Right ventricle myocardium inferior (tissue), 1 donor: ENCODE measurements at regions of chr12 and their contacts with region 1.

Region 1: DNA sequence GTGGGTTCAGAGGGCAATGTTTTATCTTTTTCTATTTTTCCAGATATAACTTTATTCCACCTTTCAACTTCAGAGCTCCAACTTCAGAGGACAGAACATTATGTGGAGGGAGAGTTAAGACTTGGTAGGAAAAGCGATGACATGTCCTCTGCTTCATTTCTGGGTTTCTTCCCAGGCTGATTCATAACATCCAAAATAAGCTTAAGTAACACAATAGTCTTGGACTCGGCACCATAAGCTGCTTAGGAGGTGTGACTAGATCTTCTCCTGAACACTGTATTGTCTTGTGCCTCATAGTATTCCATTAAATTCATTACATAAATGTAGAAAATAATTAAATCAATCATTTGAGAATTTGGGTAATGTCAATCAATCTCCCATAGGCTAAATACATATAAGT is 95.5 kb upstream of the PDE3A start:
- DNase-seq: no peak
- ATAC-seq: peak; percentile 74

Region 2: GRCh38 chr12:19757317-19757877 is 515.4 kb before region 1 on chr12:
- intact Hi-C with region 1: loop called (anchors 10 kb)
- DNase-seq: no peak
- ATAC-seq: peak; percentile 42

Region 3: DNA sequence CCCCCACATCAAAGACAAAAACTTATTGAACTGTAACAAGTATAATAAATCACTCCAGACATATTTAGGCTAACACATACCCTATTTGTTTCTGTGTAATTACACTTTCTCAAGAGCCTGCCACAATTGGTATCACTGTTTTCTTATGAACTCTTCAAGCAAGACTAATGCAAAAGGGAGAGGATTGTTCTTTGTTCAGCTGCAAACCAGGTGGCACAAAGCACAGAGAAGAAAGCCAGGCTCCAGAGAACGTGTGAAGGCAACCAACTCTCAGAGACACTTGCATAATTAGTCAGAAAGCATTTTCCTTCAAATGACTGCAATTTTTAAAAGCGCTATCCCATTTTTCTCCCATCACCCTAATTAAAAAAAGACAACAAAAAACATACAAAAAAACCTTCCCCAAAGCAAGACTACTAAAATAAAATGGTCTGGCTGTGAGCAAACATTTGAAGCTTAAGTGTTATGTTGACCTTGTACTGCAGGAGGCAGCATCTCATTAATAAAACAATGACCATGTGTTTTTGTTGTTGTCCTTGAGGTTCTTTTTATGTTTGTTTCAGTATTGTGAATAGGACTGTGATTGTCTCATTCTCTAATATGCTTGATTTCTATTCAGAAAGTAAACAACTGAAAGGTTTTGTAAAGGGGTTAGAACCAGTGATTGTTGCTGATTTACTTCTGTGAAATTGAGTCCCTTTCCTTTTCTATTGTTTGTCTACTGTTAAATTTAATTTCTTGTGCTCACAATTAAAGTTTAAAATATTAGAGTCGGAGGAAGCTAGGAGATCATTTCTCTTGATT is 357.2 kb before region 1 on chr12:
- intact Hi-C with region 1: loop called (anchors 2 kb)
- DNase-seq: no peak
- ATAC-seq: peak; percentile 70

Region 4: GRCh38 chr12:19994970-19995369 is 277.8 kb before region 1 on chr12:
- intact Hi-C with region 1: loop called (anchors 5 kb)
- DNase-seq: no peak
- ATAC-seq: no peak

Region 5: DNA sequence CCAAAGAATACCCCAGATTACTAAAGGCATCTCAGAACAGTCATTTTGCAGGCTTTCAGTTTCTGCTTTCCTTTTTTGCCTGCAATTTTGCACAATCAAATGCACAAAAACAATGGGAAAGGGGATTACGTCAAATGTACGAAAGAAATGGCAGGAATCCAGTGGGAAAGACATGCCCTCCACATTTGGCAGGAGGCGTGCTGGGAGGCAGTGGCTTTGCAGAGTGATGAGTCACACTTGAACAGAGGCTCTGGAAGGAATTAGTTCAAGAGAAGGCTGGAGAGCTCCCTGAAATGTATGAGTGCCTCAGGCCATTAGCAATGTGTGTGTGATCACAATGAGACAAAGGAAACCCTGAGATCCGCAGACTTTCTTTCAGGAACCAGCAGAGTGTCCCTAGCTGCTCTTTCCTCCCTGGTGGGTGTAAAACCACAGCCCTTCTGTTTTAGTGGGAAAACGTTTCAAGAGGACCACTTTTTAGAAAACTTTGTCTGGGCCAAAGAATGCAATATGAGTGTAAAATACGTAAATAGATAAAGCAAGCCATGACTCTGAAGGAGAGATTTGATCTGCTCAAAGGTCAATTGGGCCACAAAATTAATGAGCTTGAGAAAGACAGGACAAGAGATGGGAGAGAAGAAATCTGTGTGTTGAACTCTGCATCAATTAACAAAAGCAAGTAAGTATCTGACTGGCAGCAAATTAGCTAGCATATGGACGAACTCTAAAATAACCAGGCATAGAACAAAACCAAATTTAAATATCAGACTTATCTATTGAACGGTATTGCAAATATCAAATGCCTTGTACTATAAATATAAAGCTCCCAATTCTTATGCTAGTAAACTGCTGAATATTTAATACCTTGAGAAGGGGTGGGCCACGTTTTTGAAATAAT is 59.9 kb before region 1 on chr12:
- intact Hi-C with region 1: loop called (anchors 5 kb)
- DNase-seq: peak; percentile 85
- ATAC-seq: peak; percentile 98